ENCODE measurements at regions of chr16 and their contacts with region 1.

Region 1: GRCh38 chr16:50024684-50025536 is at the start of gene CNEP1R1:
- DNase-seq: peak; percentile 95
- ATAC-seq: peak; percentile 97
- H3K4me3 Mint-ChIP-seq: peak within 1 kb of the TSS; percentile 96
- H3K27ac Mint-ChIP-seq: peak within 1 kb of the TSS; percentile 85
- H3K4me1 Mint-ChIP-seq: peaks cover 23% of the 10 kb centered on the region
- H3K27me3 Mint-ChIP-seq: no peaks in the 10 kb centered on the region
- total RNA-seq, gene CNEP1R1: 19.3 to 22.8 TPM

Region 2: DNA sequence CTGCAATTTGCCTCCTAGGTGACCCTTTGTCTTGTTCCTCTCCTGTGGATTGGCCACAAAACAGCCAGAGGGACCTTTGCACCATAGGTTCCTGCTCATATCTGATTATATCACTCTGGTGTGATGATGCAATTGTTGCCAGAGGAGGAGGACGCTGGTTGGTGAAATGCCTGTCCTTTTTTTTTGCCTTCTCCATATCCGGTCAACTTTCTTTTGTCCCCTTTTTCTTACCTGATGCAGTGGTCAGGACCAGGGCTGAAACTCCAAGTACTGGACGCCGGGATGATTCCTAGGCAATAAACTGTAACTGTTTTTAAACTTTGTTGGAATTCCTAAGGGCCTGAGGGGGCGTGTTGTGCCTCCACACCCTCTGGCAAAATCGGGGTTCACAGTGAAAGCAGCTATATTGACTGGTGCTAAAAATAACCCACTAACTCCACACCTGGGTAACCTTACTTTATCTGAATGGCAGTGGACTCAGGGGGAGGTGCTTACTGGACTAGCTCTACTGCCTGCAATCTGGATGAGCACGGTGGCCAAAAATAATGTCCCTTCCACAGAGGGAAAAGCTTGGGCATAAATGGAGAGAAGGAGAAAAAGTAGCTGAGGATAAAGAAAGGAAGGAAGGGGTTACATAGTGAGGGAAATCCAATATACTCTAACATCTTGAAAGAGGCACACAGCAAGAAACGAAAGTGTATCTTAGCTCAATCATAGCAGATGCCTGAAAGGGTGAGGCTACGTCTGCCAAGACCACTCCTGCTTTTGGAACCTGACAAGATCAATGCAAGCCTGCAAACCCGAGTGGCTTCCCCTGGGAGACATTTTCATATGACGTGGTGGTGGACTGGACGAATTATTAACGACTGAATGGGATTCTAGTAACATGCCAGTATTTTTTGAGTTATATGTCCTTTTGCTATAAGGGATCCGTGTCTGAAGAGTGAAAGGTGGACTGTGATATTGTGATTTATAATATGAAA is 140.6 kb before region 1 on chr16:
- CTCF ChIA-PET with region 1: no interaction called
- POLR2A ChIA-PET with region 1: no interaction called
- intact Hi-C with region 1: no loop called
- DNase-seq: no peak
- ATAC-seq: no peak
- H3K4me3 Mint-ChIP-seq: no peak overlapping the region
- H3K27ac Mint-ChIP-seq: no peak overlapping the region
- H3K4me1 Mint-ChIP-seq: no peaks in the 10 kb centered on the region
- H3K27me3 Mint-ChIP-seq: peaks cover 16% of the 10 kb centered on the region

Region 3: GRCh38 chr16:49969091-49970030 is 55.5 kb before region 1 on chr16:
- CTCF ChIA-PET with region 1: no interaction called
- POLR2A ChIA-PET with region 1: no interaction called
- intact Hi-C with region 1: no loop called
- DNase-seq: no peak
- ATAC-seq: no peak
- H3K4me3 Mint-ChIP-seq: no peak overlapping the region
- H3K27ac Mint-ChIP-seq: no peak overlapping the region
- H3K4me1 Mint-ChIP-seq: no peaks in the 10 kb centered on the region
- H3K27me3 Mint-ChIP-seq: peaks cover 16% of the 10 kb centered on the region

Region 4: GRCh38 chr16:50011707-50012106 is 13.2 kb before region 1 on chr16:
- CTCF ChIA-PET with region 1: interaction called, 12 read pairs
- POLR2A ChIA-PET with region 1: no interaction called
- intact Hi-C with region 1: no loop called
- DNase-seq: no peak
- ATAC-seq: no peak
- H3K4me3 Mint-ChIP-seq: no peak overlapping the region
- H3K27ac Mint-ChIP-seq: no peak overlapping the region
- H3K4me1 Mint-ChIP-seq: no peaks in the 10 kb centered on the region
- H3K27me3 Mint-ChIP-seq: no peaks in the 10 kb centered on the region

Region 5: GRCh38 chr16:50166511-50167500 is 141.9 kb after region 1 on chr16:
- CTCF ChIA-PET with region 1: interaction called, 10 read pairs
- POLR2A ChIA-PET with region 1: no interaction called
- intact Hi-C with region 1: no loop called
- DNase-seq: peak; percentile 62
- ATAC-seq: peak; percentile 89
- H3K4me3 Mint-ChIP-seq: peak overlapping the region; percentile 59
- H3K27ac Mint-ChIP-seq: peak overlapping the region; percentile 87
- H3K4me1 Mint-ChIP-seq: peaks cover 55% of the 10 kb centered on the region
- H3K27me3 Mint-ChIP-seq: no peaks in the 10 kb centered on the region

Region 6: GRCh38 chr16:50273681-50274325 is 248.9 kb after region 1 on chr16:
- CTCF ChIA-PET with region 1: interaction called, 16 read pairs
- POLR2A ChIA-PET with region 1: no interaction called
- intact Hi-C with region 1: loop called in 1 of 2 experiments (anchors 1 kb)
- DNase-seq: peak; percentile 73
- ATAC-seq: peak; percentile 37
- H3K4me3 Mint-ChIP-seq: peak overlapping the region; percentile 97
- H3K27ac Mint-ChIP-seq: peak overlapping the region; percentile 100
- H3K4me1 Mint-ChIP-seq: peaks cover 92% of the 10 kb centered on the region
- H3K27me3 Mint-ChIP-seq: no peaks in the 10 kb centered on the region

Region 7: GRCh38 chr16:50335196-50335958 is 310.5 kb after region 1 on chr16:
- CTCF ChIA-PET with region 1: no interaction called
- POLR2A ChIA-PET with region 1: no interaction called
- intact Hi-C with region 1: loop called in 1 of 2 experiments (anchors 1 kb)
- DNase-seq: peak; percentile 74
- ATAC-seq: peak; percentile 65
- H3K4me3 Mint-ChIP-seq: peak overlapping the region; percentile 41
- H3K27ac Mint-ChIP-seq: peak overlapping the region; percentile 94
- H3K4me1 Mint-ChIP-seq: peaks cover 73% of the 10 kb centered on the region
- H3K27me3 Mint-ChIP-seq: no peaks in the 10 kb centered on the region

Region 8: DNA sequence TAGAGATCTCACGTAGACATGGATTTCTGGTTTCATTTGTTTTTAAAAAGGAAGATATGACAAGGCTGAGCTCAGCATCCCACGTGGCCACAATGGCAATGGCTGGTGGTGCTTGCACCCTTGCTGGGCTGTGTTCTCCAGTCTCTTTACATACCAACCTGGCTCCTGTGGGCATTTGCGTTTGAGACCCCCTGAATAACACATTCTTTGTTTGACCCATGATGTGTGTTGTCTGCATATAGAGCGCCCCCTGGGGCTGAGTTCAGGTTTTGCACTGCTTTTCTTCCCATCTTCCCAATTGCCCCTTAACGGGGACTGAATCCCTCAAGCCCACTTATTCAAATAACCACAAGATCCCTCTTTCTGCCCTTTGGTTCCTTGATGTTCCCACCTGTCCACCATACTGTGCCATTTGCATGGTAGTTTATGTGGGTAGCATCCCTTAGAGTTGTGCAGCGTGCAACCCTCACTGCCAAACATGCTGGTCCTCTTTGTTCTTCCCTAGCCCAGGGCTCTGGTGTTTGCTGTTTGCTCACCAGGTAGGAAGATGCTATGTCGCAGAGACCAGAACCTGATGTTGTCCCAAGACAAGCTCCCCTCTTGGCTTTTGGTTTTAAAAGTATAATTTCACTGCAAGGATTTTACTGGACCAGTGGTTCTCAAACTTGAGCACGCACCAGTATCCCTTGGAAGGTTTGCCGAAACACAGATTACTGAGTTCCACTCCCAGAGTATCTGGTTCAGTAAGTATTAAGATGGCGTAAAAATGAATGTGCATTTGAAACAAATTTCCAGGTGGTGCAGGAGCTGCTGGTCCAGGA is 484.8 kb after region 1 on chr16:
- CTCF ChIA-PET with region 1: no interaction called
- POLR2A ChIA-PET with region 1: no interaction called
- intact Hi-C with region 1: loop called in 1 of 2 experiments (anchors 1 kb)
- DNase-seq: peak; percentile 65
- ATAC-seq: peak; percentile 36
- H3K4me3 Mint-ChIP-seq: no peak overlapping the region
- H3K27ac Mint-ChIP-seq: no peak overlapping the region
- H3K4me1 Mint-ChIP-seq: no peaks in the 10 kb centered on the region
- H3K27me3 Mint-ChIP-seq: no peaks in the 10 kb centered on the region

Region 9: GRCh38 chr16:50741808-50742575 is 717.1 kb after region 1 on chr16 and contains the start of gene CYLD:
- CTCF ChIA-PET with region 1: interaction called, 5 read pairs
- POLR2A ChIA-PET with region 1: no interaction called
- intact Hi-C with region 1: loop called (anchors 2 to 10 kb)
- DNase-seq: peak; percentile 100
- ATAC-seq: peak; percentile 91
- H3K4me3 Mint-ChIP-seq: peak within 1 kb of the TSS; percentile 93
- H3K27ac Mint-ChIP-seq: peak within 1 kb of the TSS; percentile 95
- H3K4me1 Mint-ChIP-seq: peaks cover 42% of the 10 kb centered on the region
- H3K27me3 Mint-ChIP-seq: no peaks in the 10 kb centered on the region
- total RNA-seq, gene CYLD: 72.4 to 92.8 TPM